Naive thymus-derived CD8-positive, alpha-beta T cell (primary cell): ENCODE measurements at regions of chr2 and their contacts with region 1.

Region 1: GRCh38 chr2:43226558-43226954 is at the start of gene ZFP36L2:
- DNase-seq: peak; percentile 92 to 98 (median 96)
- ATAC-seq: peak; percentile 61 to 71
- H3K4me3 Mint-ChIP-seq: peak within 1 kb of the TSS; percentile 71 to 100 (median 96)
- H3K27ac Mint-ChIP-seq: peak within 1 kb of the TSS; percentile 82 to 99 (median 96)
- H3K4me1 Mint-ChIP-seq: peaks cover 20 to 41% (median 31%) of the 10 kb centered on the region in 4 donors
- H3K27me3 Mint-ChIP-seq: peaks cover 0 to 5% (median 0%) of the 10 kb centered on the region in 5 donors
- polyA plus RNA-seq, gene ZFP36L2: 222 to 420 (median 390) TPM

Region 2: GRCh38 chr2:42947809-42948600 is 278.6 kb before region 1 on chr2:
- POLR2A ChIA-PET with region 1: interaction called, 15 read pairs
- DNase-seq: no peak
- ATAC-seq: no peak
- H3K4me3 Mint-ChIP-seq: peak overlapping the region in 1 of 10 donors; percentile 36
- H3K27ac Mint-ChIP-seq: peak overlapping the region in 3 of 10 donors; percentile 12 to 50 (median 27)
- H3K4me1 Mint-ChIP-seq: peaks cover 8 to 39% (median 14%) of the 10 kb centered on the region in 4 donors
- H3K27me3 Mint-ChIP-seq: no peaks in the 10 kb centered on the region

Region 3: DNA sequence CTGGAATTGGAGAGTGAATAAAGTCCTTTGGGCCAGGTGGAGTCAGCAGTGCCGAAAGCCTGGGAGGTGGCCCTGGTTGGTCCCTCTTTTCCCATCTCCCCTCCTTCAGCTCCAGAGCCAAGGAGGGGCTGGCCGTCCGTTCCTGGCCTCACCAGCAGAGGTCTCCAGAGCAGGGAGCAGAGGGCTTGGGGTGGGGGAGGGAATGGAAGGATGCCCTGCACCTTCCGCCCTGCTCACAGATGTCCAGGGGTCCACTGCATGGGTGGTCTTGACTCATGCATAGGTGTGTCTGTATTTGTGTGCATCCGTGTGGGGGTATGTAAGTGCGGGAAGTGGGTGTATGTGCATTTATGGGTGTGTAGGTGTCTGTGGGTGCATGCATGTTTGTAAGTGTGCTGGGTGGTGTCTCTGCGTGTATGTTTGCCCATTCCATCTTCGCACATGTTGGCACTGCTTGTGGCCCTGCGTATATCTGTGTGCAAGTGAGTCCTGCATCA is 202.0 kb before region 1 on chr2:
- POLR2A ChIA-PET with region 1: interaction called, 22 read pairs
- DNase-seq: peak in 6 of 10 donors; percentile 17 to 45 (median 27)
- ATAC-seq: peak; percentile 47 to 57
- H3K4me3 Mint-ChIP-seq: peak overlapping the region in 5 of 10 donors; percentile 9 to 52 (median 32)
- H3K27ac Mint-ChIP-seq: peak overlapping the region; percentile 21 to 93 (median 82)
- H3K4me1 Mint-ChIP-seq: peaks cover 28 to 44% (median 36%) of the 10 kb centered on the region in 4 donors
- H3K27me3 Mint-ChIP-seq: no peaks in the 10 kb centered on the region

Region 4: DNA sequence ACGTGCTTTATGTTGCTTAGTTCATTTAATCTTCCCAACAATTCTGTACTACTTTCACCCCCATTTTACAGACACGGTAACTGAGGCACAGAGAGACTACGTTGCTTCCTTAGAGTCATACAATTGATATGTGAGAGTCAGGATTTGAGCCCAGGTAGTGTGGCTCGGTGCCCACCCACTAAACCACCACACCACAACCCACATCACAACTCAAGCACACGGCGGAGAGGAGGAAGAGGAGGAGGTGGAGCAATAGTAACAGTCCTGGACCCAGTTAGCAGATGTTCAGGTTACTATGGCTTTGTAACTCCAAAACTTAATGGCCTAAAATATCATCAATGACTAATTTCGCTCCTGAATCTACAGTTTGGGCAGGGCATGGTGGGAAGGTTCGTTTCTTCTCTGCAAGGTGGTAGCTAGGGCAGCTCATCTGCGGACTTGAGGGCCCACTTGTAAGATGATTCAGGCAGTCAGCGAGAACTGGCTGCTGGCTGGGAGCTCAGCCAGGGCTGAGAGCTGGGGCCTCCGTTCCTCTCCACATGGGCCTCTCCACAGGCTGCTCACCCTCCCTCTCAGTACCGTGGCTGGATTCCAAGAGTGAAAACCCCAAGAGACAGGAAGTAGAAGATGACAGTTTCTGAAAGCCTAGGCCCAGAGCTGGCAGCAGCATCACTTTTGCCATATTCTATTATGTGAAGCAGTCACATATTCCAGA is 167.2 kb before region 1 on chr2:
- POLR2A ChIA-PET with region 1: interaction called, 15 read pairs
- DNase-seq: peak; percentile 19 to 84 (median 62)
- ATAC-seq: peak; percentile 89 to 90
- H3K4me3 Mint-ChIP-seq: peak overlapping the region; percentile 34 to 76 (median 58)
- H3K27ac Mint-ChIP-seq: peak overlapping the region; percentile 84 to 95 (median 90)
- H3K4me1 Mint-ChIP-seq: peaks cover 27 to 50% (median 37%) of the 10 kb centered on the region in 4 donors
- H3K27me3 Mint-ChIP-seq: no peaks in the 10 kb centered on the region

Region 5: GRCh38 chr2:43158259-43158880 is 68.2 kb before region 1 on chr2:
- POLR2A ChIA-PET with region 1: interaction called, 1,530 read pairs
- DNase-seq: peak in 3 of 10 donors; percentile 46 to 72 (median 56)
- ATAC-seq: peak; percentile 43 to 60
- H3K4me3 Mint-ChIP-seq: peak overlapping the region; percentile 76 to 89 (median 82)
- H3K27ac Mint-ChIP-seq: peak overlapping the region; percentile 94 to 100 (median 98)
- H3K4me1 Mint-ChIP-seq: peaks cover 45 to 93% (median 89%) of the 10 kb centered on the region in 4 donors
- H3K27me3 Mint-ChIP-seq: no peaks in the 10 kb centered on the region

Region 6: DNA sequence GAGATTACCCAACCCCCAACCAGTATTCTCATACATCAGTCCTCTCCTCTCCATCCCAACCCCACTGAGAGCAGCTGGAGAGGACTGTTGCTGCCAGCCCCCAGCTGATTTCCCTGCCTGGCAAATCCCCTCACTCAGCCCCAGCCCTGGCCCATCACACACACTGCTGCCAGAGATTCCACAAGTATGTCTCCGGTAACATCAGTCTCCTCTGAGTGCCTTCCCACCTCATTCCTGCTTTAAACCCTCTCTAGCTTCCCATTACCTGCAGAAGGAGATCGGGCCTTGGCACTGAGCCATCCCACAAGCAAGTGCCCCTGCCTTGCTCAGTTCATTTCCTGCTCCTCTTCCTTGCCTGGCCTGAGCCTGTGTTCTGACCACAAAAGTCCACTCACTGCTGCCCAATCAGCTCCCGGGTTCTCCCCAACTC is 50.4 kb after region 1 on chr2:
- POLR2A ChIA-PET with region 1: no interaction called
- DNase-seq: no peak
- ATAC-seq: no peak
- H3K4me3 Mint-ChIP-seq: no peak overlapping the region
- H3K27ac Mint-ChIP-seq: peak overlapping the region in 4 of 10 donors; percentile 4 to 82 (median 62)
- H3K4me1 Mint-ChIP-seq: peaks cover 0 to 3% (median 1%) of the 10 kb centered on the region in 4 donors
- H3K27me3 Mint-ChIP-seq: no peaks in the 10 kb centered on the region